ENCODE measurements at regions of chr13 and their contacts with region 1.

Region 1: DNA sequence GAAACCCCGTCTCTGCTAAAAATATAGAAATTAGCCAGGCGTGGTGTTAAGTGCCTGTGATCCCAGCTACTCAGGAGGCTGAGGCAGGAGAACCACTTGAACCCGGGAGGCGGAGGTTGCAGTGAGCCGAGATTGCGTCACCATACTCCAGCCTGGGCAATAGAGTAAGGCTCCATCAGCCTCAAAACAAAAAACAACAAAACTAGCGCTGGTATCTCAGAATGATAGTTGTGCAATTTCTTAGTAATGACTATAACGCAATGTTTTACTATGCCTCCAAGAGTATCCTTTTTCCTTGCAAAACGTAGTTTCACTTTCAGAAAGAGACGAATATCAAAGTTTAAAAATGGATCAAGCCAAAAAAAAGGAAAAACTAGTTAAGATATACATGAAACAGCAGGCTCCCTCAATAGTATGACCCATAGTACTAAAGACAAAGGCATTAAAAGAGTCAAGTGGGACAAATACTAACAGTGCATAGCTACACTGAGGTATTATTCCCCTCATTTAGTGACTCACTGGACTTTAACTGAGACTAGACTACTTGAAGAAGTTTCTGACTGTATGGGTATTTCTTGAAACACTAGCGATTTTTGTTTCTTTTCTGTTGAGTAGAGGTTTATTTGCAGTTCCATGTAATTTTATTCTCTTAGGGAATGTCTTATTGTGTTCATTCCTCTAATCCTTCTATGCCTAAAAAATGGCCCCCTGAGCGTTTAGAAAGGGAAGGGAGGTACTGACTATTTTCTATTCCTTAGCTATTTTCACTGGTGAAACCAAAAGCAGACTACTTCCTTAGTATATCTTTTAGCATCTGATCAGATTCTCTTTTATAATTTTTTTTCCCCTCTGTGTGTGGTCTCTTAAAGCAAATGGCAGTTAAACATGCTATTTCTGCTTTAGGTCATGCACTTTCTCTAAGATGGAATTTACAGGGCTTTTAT is 10.4 kb upstream of the ITM2B start:
- DNase-seq: peak in 1 of 2 donors; percentile 27
- ATAC-seq: peak; percentile 77 to 86
- H3K4me3 ChIP-seq: peak overlapping the region; percentile 42 to 44 (median 44)
- H3K27ac ChIP-seq: peak overlapping the region; percentile 64 to 82 (median 72)
- H3K4me1 ChIP-seq: peaks cover 0 to 17% of the 10 kb centered on the region in 2 donors
- H3K27me3 ChIP-seq: no peaks in the 10 kb centered on the region
- CTCF ChIP-seq: no peak
- POLR2A ChIP-seq: no peak

Region 2: GRCh38 chr13:48078251-48078656 is 144.4 kb before region 1 on chr13:
- in situ Hi-C with region 1: no loop called
- intact Hi-C with region 1: no loop called
- DNase-seq: no peak
- ATAC-seq: no peak
- H3K4me3 ChIP-seq: no peak overlapping the region
- H3K27ac ChIP-seq: no peak overlapping the region
- H3K4me1 ChIP-seq: no peaks in the 10 kb centered on the region
- H3K27me3 ChIP-seq: no peaks in the 10 kb centered on the region
- CTCF ChIP-seq: no peak
- POLR2A ChIP-seq: no peak

Region 3: GRCh38 chr13:48155848-48156247 is 66.8 kb before region 1 on chr13:
- in situ Hi-C with region 1: no loop called
- intact Hi-C with region 1: loop called (anchors 1 kb)
- DNase-seq: no peak
- ATAC-seq: peak; percentile 58 to 71
- H3K4me3 ChIP-seq: no peak overlapping the region
- H3K27ac ChIP-seq: peak overlapping the region in 3 of 4 donors; percentile 13 to 43 (median 37)
- H3K4me1 ChIP-seq: no peaks in the 10 kb centered on the region
- H3K27me3 ChIP-seq: no peaks in the 10 kb centered on the region
- CTCF ChIP-seq: no peak
- POLR2A ChIP-seq: no peak

Region 4: DNA sequence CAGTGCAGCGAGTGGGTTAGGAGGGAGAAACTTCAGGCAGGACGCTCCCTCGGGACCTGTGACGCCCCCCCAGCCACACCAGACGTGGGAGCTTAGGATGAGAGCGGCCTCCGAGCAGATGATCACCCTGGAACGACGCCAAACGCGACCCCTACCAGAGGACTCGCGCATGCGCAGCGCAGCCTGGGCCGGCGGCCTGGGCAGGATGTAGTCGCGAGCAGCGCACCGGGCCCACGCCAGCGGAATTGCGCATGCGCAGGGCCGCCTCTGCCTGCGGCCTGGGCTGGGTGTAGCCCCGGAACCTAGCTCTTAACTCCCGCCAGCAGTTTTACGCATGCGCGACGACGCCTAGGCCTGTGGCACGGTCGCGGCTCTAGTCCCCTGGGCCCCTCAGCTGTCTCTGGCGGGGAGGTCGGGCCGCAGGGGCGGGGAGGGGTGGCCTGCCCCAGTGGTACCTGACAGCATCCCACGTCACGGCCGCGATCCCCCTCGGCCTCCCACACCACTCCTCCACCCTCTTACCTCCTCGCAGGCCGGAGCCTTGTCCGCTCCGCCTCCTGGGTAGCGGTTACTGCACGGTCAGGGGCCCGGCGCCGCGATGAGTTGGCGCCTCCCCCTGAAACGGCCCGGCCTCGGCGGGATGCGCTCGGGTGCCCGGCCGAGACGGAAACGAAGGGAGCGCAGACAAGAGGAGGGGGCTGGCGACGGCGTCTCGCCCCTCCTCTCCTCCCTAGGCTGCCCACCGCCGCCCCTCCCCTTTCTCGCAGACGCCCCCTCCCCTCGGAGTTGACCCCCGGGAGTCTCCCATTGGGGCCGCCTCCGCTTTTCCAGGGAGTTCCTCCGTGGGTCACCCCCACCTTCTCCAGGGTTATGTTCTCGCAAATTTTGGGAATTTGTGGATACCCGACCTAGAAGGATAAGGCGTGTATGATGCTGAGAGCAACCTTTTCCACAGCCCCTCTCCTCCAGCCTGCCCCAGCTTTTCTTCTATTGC is 310.2 kb after region 1 on chr13 and contains the start of gene RCBTB2:
- in situ Hi-C with region 1: no loop called
- intact Hi-C with region 1: no loop called
- DNase-seq: peak; percentile 96 to 98
- ATAC-seq: peak; percentile 95
- H3K4me3 ChIP-seq: peak within 1 kb of the TSS; percentile 81 to 94 (median 90)
- H3K27ac ChIP-seq: peak within 1 kb of the TSS; percentile 92 to 98 (median 94)
- H3K4me1 ChIP-seq: peaks cover 7 to 13% of the 10 kb centered on the region in 2 donors
- H3K27me3 ChIP-seq: no peaks in the 10 kb centered on the region
- CTCF ChIP-seq: no peak
- POLR2A ChIP-seq: peak; percentile 83 to 86
- total RNA-seq, gene RCBTB2: 1.7 to 9.1 (median 7.6) TPM